Common myeloid progenitor, CD34-positive (primary cell): ENCODE measurements at regions of chr16 and their contacts with region 1.

Region 1: DNA sequence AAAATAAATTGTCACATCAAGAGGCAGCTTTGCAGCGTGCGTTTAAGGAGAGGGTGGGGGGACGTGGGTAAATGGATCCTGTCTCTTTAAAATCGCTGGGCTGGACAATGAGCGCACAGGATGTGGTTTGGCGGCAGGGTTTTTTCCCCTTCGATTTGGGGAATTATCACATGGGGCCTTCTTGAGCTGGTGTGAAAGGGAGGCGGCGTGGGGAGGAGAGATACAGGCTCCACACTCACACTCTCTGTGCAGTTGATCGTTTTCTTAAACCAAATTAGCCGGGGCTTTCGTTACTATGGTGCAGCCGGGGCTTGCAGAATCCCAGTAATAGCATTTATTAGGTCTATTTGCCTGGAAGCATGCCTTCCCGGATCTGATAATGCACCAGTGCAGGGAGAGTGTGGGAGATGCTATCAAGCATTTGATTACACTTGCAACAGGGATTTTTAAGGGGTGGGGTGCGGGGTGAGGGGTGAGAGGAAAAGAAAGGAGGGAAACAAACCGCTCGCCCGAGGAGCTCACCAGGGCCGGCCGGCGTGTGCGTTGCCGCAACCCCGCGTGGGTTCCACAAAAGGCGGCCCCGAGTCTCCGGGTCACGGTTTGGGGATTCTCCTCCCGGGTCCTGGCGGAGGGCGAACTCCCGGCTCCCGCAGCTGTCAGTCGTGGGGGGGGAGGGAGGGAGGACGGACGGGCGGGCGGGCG is 58.9 kb upstream of the GSE1 start:
- DNase-seq: peak; percentile 91 to 97 (median 96)
- H3K4me3 ChIP-seq: peak overlapping the region; percentile 40 to 97 (median 84)
- H3K27ac ChIP-seq: peak overlapping the region; percentile 95 to 98
- H3K4me1 ChIP-seq: peaks cover 5 to 41% (median 33%) of the 10 kb centered on the region in 4 experiments
- H3K27me3 ChIP-seq: no peaks in the 10 kb centered on the region

Region 2: GRCh38 chr16:85448557-85449197 is 105.6 kb before region 1 on chr16:
- CTCF ChIA-PET with region 1: interaction called, 21 read pairs
- POLR2A ChIA-PET with region 1: interaction called, 11 read pairs
- DNase-seq: peak; percentile 57 to 94 (median 89)
- H3K4me3 ChIP-seq: peak overlapping the region in 3 of 7 experiments; percentile 11 to 39 (median 19)
- H3K27ac ChIP-seq: peak overlapping the region in 1 of 2 experiments; percentile 54
- H3K4me1 ChIP-seq: peaks cover 0 to 75% (median 72%) of the 10 kb centered on the region in 4 experiments
- H3K27me3 ChIP-seq: no peaks in the 10 kb centered on the region

Region 3: GRCh38 chr16:85528528-85529387 is 25.5 kb before region 1 on chr16:
- CTCF ChIA-PET with region 1: interaction called, 16 read pairs
- POLR2A ChIA-PET with region 1: interaction called, 3 read pairs
- DNase-seq: peak in 2 of 3 donors; percentile 40 to 53
- H3K4me3 ChIP-seq: no peak overlapping the region
- H3K27ac ChIP-seq: peak overlapping the region in 1 of 2 experiments; percentile 34
- H3K4me1 ChIP-seq: peaks cover 0 to 41% (median 20%) of the 10 kb centered on the region in 4 experiments
- H3K27me3 ChIP-seq: no peaks in the 10 kb centered on the region

Region 4: DNA sequence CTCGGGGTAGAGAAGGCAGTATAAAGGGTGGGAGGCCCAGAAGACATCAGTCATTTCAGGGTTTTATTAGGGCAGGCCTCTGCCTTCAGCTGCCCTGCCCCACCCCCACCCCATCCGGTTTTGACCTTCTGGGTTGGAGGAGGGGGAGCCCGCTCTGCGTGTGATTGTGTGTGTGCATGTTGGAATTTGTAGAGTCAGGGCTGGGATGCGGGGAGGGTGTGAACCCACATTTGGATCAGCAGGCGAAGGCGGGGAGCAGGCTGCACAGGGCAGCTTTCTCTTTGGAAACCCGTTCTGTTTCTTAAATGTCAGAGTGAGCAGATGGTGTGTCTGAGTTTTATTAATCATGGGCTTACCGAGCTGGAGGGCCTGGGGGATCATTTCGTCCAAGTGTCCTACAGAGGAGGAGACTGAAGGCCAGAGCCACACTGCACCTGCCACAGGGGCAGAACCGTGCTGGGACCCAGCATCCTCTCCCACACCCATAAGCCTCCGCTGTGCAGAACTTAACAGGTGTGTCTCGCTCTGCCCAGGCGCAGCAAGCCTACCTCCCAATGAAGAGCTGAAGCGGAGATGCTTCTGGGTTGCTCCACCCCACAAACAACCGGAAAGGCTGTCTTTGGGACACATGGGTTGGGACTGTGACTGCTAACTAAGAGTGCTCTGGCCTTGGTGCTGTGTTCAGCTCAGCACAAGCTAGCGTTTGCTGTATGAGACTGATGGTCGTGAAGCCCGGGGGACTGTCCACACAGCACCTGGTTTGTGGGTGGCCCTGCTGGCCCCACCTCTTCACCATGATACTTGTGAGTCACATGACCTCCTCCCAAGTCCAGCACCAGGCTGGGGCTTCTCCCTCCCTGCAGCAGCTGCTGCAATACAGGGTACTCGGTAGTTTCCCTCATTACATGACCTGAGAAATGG is 12.0 kb before region 1 on chr16:
- CTCF ChIA-PET with region 1: interaction called, 62 read pairs
- POLR2A ChIA-PET with region 1: interaction called, 14 read pairs
- DNase-seq: no peak
- H3K4me3 ChIP-seq: peak overlapping the region in 1 of 7 experiments; percentile 10
- H3K27ac ChIP-seq: no peak overlapping the region
- H3K4me1 ChIP-seq: peaks cover 13 to 53% (median 43%) of the 10 kb centered on the region in 4 experiments
- H3K27me3 ChIP-seq: no peaks in the 10 kb centered on the region

Region 5: GRCh38 chr16:85569615-85570212 is 15.5 kb after region 1 on chr16:
- CTCF ChIA-PET with region 1: interaction called, 35 read pairs
- POLR2A ChIA-PET with region 1: interaction called, 11 read pairs
- DNase-seq: peak in 2 of 3 donors; percentile 83 to 86
- H3K4me3 ChIP-seq: peak overlapping the region in 4 of 7 experiments; percentile 41 to 45 (median 44)
- H3K27ac ChIP-seq: peak overlapping the region; percentile 41 to 87
- H3K4me1 ChIP-seq: peaks cover 4 to 98% (median 95%) of the 10 kb centered on the region in 4 experiments
- H3K27me3 ChIP-seq: no peaks in the 10 kb centered on the region

Region 6: GRCh38 chr16:85615852-85616606 is 61.8 kb after region 1 on chr16:
- CTCF ChIA-PET with region 1: interaction called, 22 read pairs
- POLR2A ChIA-PET with region 1: interaction called, 26 read pairs
- DNase-seq: peak; percentile 95 to 98 (median 98)
- H3K4me3 ChIP-seq: peak overlapping the region; percentile 34 to 85 (median 74)
- H3K27ac ChIP-seq: peak overlapping the region; percentile 42 to 87
- H3K4me1 ChIP-seq: peaks cover 5 to 64% (median 50%) of the 10 kb centered on the region in 4 experiments
- H3K27me3 ChIP-seq: no peaks in the 10 kb centered on the region